AG04450 (cell line): ENCODE measurements at regions of chr9 and their contacts with region 1.

Region 1: DNA sequence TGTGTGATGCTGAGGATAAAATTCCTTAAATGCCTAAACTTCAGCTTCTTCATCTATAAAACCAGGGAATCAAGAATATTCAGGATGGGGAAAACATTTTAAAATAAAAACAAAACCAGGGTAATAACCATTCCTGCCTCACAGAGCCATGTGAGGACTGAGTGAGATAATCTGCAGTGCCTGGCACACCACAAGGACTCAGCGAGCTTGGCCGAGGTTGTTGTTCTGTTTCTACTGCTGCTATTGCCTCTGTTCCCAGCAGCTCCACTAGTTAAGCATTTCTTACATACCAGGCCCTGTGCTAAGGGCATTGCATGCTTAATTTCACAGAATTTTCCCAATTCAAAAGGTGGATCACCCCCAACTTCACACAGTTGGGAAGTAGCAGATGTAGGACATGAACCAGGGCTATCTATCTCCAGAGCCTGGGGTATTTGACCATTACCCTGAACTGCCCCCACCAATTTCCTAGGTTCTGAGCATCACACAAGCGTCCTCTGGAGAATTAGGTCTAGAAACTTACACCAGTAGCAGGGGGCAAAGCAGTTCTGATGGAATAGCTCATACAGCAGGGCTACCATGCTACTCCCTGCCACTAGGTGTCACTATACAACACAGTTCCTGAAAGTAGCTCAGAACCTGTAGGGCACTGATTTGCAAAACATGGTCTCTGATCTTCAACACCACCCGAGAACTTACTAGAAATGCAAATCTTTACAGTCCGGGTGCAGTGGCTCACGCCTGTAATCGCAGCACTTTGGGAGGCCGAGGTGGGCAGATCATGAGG is 74.3 kb downstream of the LRSAM1 start:
- DNase-seq: no peak
- H3K4me3 ChIP-seq: no peak overlapping the region
- H3K27ac ChIP-seq: peak overlapping the region; percentile 21
- H3K27me3 ChIP-seq: no peaks in the 10 kb centered on the region
- CTCF ChIP-seq: peak; percentile 67

Region 2: DNA sequence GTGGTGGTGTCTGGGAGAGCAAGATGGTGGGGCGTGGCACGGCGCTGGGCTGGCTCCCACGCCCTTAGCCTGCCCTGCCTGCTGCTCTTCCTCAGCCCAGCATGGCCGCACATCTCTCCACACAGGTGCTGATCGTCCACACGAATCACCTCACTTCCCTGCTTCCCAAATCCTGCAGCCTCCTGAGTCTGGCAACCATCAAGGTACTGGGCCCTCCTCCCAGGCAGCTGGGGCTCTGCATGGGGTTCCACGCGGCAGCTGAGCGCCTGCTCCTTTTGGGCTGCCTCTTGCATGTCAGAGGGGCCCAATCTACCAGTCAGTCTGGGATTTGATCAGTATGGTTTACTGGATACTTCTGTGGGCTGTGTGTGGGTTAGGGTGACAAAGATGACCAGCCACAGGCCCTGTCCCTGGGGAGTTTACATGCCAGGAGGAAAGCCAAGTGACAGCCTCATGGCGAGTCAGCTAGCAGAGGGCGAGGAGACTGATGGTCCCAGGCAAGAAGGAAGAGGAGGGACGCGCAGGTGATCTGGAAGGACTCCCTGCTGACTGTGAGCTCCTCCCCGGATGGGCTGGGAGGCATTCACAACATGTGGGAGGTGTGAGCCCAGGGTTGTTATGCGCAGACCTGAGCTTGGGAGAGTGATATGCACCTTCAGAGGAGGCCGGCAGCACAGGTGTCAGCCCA is 68.3 kb before region 1 on chr9:
- CTCF ChIA-PET with region 1: no interaction called
- POLR2A ChIA-PET with region 1: no interaction called
- DNase-seq: no peak
- H3K4me3 ChIP-seq: no peak overlapping the region
- H3K27ac ChIP-seq: no peak overlapping the region
- H3K27me3 ChIP-seq: no peaks in the 10 kb centered on the region
- CTCF ChIP-seq: no peak

Region 3: GRCh38 chr9:127554966-127555767 is 29.6 kb after region 1 on chr9:
- CTCF ChIA-PET with region 1: interaction called, 14 read pairs
- POLR2A ChIA-PET with region 1: interaction called, 6 read pairs
- DNase-seq: no peak
- H3K4me3 ChIP-seq: no peak overlapping the region
- H3K27ac ChIP-seq: peak overlapping the region; percentile 89
- H3K27me3 ChIP-seq: no peaks in the 10 kb centered on the region
- CTCF ChIP-seq: no peak

Region 4: DNA sequence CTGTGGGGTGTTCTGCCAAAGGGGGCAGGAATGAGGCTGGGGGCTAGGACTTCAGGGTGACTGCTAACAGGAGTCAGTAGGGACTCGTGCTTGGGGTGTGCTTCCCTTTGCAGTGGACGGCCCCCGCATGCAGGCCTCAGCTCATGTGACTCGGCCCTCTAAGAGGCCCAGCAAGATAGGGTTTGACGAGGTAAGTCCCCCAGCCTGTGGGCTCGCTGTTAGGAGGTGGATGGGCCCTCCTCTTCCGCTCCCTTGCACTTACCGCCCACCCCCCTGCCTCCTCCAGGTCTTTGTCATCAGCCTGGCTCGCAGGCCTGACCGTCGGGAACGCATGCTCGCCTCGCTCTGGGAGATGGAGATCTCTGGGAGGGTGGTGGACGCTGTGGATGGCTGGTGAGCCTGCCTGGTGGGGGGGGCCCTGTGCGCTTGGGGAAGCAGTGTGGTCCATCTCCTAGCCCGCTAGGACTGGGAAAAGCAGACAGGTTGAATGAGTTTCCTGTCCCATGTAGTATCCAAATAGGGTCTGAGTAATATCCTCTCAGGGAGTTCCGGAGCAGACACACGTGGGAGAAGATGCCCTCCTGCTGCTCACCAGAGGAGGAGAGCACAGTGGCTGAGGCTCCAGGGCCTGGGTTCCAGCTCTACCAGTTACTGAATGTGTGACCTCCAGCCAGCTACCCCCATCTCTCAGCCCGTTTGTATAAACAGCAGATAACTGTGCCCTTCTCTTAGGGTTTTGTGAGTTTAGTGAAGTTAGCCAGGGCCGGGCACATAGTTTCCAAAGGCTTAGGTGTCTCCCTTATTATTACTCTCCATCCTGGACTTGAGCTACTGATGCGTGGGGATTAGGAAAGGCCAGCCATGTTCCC is 903.3 kb after region 1 on chr9:
- CTCF ChIA-PET with region 1: no interaction called
- POLR2A ChIA-PET with region 1: no interaction called
- DNase-seq: no peak
- H3K4me3 ChIP-seq: no peak overlapping the region
- H3K27ac ChIP-seq: no peak overlapping the region
- H3K27me3 ChIP-seq: no peaks in the 10 kb centered on the region
- CTCF ChIP-seq: no peak